Activated T-helper 2 cell treated with anti-CD3 and anti-CD28 coated beads, Interferon-gamma antibody, Interleukin-2, Interleukin-4, amounts not matched to agents 10 μg/mL and 5 μg/mL and 100 μg/mL, durations not matched to agents 14 hours and 24 hours and 36 hours (primary cell): ENCODE measurements at regions of chr11 and their contacts with region 1.

Region 1: GRCh38 chr11:43311791-43312607 is at the start of gene API5:
- DNase-seq: peak; percentile 91
- H3K4me3 Mint-ChIP-seq: peak within 1 kb of the TSS; percentile 97
- H3K27ac Mint-ChIP-seq: peak within 1 kb of the TSS; percentile 92
- H3K4me1 Mint-ChIP-seq: peaks cover 32% of the 10 kb centered on the region
- H3K27me3 Mint-ChIP-seq: no peaks in the 10 kb centered on the region
- total RNA-seq, gene API5: 158 and 164 TPM in 2 replicates

Region 2: GRCh38 chr11:43172477-43172876 is 139.5 kb before region 1 on chr11:
- intact Hi-C with region 1: loop called (anchors 5 kb)
- DNase-seq: no peak
- H3K4me3 Mint-ChIP-seq: no peak overlapping the region
- H3K27ac Mint-ChIP-seq: no peak overlapping the region
- H3K4me1 Mint-ChIP-seq: no peaks in the 10 kb centered on the region
- H3K27me3 Mint-ChIP-seq: no peaks in the 10 kb centered on the region

Region 3: GRCh38 chr11:43358801-43359421 is 46.9 kb after region 1 on chr11 and contains the start of gene TTC17:
- intact Hi-C with region 1: loop called (anchors 1 kb)
- DNase-seq: peak; percentile 92
- H3K4me3 Mint-ChIP-seq: peak within 1 kb of the TSS; percentile 98
- H3K27ac Mint-ChIP-seq: peak within 1 kb of the TSS; percentile 97
- H3K4me1 Mint-ChIP-seq: peaks cover 36% of the 10 kb centered on the region
- H3K27me3 Mint-ChIP-seq: no peaks in the 10 kb centered on the region
- total RNA-seq, gene TTC17: 63.5 and 76.1 TPM in 2 replicates

Region 4: GRCh38 chr11:43419460-43419859 is 107.5 kb after region 1 on chr11:
- intact Hi-C with region 1: loop called (anchors 1 kb)
- DNase-seq: no peak
- H3K4me3 Mint-ChIP-seq: no peak overlapping the region
- H3K27ac Mint-ChIP-seq: no peak overlapping the region
- H3K4me1 Mint-ChIP-seq: peaks cover 3% of the 10 kb centered on the region
- H3K27me3 Mint-ChIP-seq: no peaks in the 10 kb centered on the region

Region 5: GRCh38 chr11:43459246-43459645 is 147.2 kb after region 1 on chr11:
- intact Hi-C with region 1: no loop called
- DNase-seq: no peak
- H3K4me3 Mint-ChIP-seq: no peak overlapping the region
- H3K27ac Mint-ChIP-seq: no peak overlapping the region
- H3K4me1 Mint-ChIP-seq: no peaks in the 10 kb centered on the region
- H3K27me3 Mint-ChIP-seq: no peaks in the 10 kb centered on the region

Region 6: GRCh38 chr11:43567396-43567975 is 255.5 kb after region 1 on chr11:
- intact Hi-C with region 1: loop called (anchors 10 kb)
- DNase-seq: no peak
- H3K4me3 Mint-ChIP-seq: no peak overlapping the region
- H3K27ac Mint-ChIP-seq: no peak overlapping the region
- H3K4me1 Mint-ChIP-seq: no peaks in the 10 kb centered on the region
- H3K27me3 Mint-ChIP-seq: peaks cover 41% of the 10 kb centered on the region

Region 7: DNA sequence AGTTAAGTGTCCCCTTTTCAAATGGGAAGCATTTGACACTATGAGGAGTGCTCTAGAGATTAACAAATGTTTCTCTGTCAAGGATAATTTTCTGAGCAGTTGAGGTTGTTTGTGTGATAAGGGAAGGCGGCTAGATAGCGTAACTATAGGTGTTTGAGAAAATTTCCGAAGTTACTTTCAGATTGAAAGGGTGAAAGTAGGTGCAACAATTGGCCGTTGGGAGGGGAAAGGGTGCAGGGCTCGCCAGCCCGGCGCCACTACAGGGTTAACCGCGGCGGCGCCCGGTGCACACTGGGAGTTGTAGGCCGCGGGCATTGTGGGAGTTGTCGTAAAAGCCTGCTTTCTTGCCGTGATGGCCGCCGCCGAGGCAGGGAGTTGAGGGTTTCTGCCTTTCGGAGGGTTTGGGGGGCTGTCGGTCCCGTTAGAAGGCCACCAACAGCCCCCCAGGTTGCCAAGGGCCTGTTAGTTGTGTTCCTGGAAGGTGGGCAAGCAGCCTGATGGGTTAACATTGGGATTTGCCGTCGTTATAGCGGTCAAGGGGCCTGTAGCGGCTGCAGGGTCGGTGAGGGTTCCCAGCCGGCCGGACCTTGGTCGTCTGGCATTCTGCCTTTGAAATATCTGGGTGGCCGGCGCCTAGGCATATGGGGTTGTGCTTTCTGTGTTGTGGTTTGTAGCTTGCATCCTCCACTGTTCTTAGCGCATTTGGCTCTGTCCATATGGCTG is 332.1 kb after region 1 on chr11:
- intact Hi-C with region 1: loop called (anchors 5 kb)
- DNase-seq: peak; percentile 84
- H3K4me3 Mint-ChIP-seq: peak overlapping the region; percentile 96
- H3K27ac Mint-ChIP-seq: peak overlapping the region; percentile 87
- H3K4me1 Mint-ChIP-seq: peaks cover 19% of the 10 kb centered on the region
- H3K27me3 Mint-ChIP-seq: peaks cover 15% of the 10 kb centered on the region